A673 (cell line): ENCODE measurements at regions of chr5 and their contacts with region 1.

Region 1: DNA sequence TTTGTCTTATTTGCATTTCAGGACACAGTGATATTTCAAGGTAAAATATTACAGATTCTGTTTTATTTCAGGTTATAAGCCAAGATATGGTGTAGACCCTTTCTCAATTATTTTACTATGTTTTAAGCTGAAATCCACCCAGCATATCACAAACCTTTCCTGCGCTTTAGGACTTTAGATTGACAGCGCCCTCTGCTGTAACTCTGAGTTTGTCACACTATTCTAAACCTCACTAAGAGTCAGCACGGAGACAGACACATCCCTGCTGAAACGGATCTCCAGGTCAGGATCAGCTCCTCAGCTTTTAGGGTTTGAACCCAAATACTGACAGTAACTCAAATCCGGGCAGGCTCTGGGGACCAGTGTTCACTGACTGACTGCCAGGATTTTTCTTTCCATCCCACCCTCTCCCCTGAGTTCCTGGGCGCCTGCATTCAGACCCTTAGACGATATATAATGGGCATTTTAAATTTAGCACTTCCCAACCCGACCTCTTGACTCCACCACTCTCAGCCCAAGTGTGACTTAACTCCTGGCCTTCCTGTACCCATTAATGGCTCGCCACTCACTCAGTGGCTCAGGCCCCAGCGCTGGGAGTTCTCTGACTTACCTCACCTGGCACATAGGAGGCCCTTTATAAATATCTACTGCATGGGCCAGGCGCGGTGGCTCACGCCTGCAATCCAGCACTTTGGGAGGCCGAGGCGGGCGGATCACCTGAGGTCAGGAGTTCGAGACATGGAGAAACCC is 33.5 kb downstream of the TLX3 start:
- DNase-seq: peak; percentile 64
- H3K4me3 ChIP-seq: no peak overlapping the region
- H3K27ac ChIP-seq: no peak overlapping the region
- H3K4me1 ChIP-seq: no peaks in the 10 kb centered on the region
- H3K27me3 ChIP-seq: peaks cover 24% of the 10 kb centered on the region
- CTCF ChIP-seq: peak; percentile 71

Region 2: DNA sequence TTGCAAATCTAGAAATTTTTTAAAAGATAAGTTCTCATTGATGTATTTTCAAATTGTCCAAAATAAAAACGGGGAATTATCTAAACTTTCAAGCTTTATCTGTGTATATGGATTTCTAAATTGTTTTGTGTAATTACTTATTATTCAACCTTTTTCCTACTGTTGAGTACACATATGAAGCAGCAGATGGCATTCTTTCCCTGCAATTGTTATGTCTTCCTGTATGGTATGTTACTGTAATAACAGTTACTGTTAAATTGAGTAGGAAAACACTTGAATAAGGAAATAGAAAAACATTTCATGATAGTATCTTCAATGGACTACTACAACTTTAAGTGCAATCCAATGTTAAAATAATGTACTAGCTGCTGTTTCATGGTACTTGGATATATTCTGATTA is 355.9 kb before region 1 on chr5:
- CTCF ChIA-PET with region 1: no interaction called
- POLR2A ChIA-PET with region 1: no interaction called
- intact Hi-C with region 1: loop called (anchors 5 kb)
- DNase-seq: no peak
- H3K4me3 ChIP-seq: no peak overlapping the region
- H3K27ac ChIP-seq: no peak overlapping the region
- H3K4me1 ChIP-seq: no peaks in the 10 kb centered on the region
- H3K27me3 ChIP-seq: peaks cover 13% of the 10 kb centered on the region
- CTCF ChIP-seq: no peak

Region 3: DNA sequence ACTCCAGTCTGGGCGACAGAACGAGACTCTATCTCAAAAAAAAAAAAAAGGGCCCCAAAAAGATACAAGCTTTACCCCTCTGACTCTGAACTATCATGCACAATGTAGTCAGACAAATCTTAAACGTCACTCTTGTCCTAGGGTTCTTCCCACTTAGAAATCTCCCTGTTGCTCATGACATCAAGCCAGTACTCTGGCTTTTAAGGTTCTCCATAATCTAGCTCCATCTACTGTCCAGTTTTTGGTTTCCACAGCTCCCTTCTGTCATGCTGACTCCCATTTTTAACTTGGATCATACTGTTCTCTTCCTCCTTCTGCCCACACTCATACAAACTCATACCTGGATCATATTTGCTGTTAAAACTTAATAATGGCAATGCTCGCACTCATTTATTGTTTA is 190.2 kb before region 1 on chr5:
- CTCF ChIA-PET with region 1: no interaction called
- POLR2A ChIA-PET with region 1: no interaction called
- intact Hi-C with region 1: no loop called
- DNase-seq: peak; percentile 15
- H3K4me3 ChIP-seq: no peak overlapping the region
- H3K27ac ChIP-seq: no peak overlapping the region
- H3K4me1 ChIP-seq: no peaks in the 10 kb centered on the region
- H3K27me3 ChIP-seq: peaks cover 30% of the 10 kb centered on the region
- CTCF ChIP-seq: 0 out of 2 replicates have a peak, but pooled peaks have one; percentile 36

Region 4: GRCh38 chr5:171521219-171521633 is 178.7 kb after region 1 on chr5:
- CTCF ChIA-PET with region 1: no interaction called
- POLR2A ChIA-PET with region 1: no interaction called
- intact Hi-C with region 1: no loop called
- DNase-seq: peak; percentile 49
- H3K4me3 ChIP-seq: no peak overlapping the region
- H3K27ac ChIP-seq: no peak overlapping the region
- H3K4me1 ChIP-seq: no peaks in the 10 kb centered on the region
- H3K27me3 ChIP-seq: no peaks in the 10 kb centered on the region
- CTCF ChIP-seq: no peak